HepG2 (cell line): ENCODE measurements at regions of chr3 and their contacts with region 1.

Region 1: DNA sequence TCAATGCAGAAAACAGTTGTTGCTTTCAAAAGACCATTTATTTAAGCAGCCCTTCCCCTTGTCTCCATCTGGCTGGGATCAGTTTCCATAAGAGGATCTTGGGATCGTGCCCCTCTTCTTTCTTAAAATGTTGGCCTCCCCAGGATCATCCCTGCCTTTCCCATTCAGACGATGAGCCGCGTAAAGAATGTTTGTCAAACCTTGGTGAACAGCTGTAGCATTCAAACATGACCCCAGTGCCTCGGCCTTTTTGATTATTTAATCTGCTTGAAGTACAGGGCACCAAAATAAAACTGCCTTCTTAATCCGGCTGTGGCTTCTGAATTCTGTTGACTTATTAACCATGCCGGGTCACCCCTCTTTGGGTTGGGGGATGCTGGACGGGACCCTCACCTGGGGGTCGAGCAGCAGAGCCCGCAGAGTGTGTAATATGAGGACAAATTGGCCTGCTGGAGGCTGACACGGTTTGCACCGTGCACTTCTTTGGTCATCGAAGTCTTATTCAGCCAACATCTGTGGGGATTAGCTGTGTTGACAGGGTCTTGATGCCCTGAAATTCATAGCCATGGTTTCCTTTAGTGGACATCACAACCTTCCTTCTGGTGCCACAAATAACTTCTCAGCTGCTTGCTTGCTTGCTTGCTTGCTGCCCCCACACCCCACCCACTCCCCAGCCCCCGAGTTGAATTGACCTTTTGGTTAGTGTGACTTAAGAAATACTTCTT is at the start of gene LRTM1:
- DNase-seq: no peak
- ATAC-seq: no peak
- H3K4me3 ChIP-seq: no peak within 1 kb of the TSS
- H3K27ac ChIP-seq: no peak within 1 kb of the TSS
- H3K4me1 ChIP-seq: no peaks in the 10 kb centered on the region
- H3K27me3 ChIP-seq: no peaks in the 10 kb centered on the region; a peak in 2 of 5 replicates
- CTCF ChIP-seq: no peak
- EP300 ChIP-seq: no peak
- POLR2A ChIP-seq: no peak
- RAD21 ChIP-seq: no peak
- total RNA-seq, gene LRTM1: not detected in 2 replicates

Region 2: GRCh38 chr3:54691289-54691771 is 236.9 kb before region 1 on chr3:
- CTCF ChIA-PET with region 1: no interaction called
- POLR2A ChIA-PET with region 1: no interaction called
- in situ Hi-C with region 1: no loop called
- intact Hi-C with region 1: no loop called
- DNase-seq: no peak
- ATAC-seq: no peak
- H3K4me3 ChIP-seq: no peak overlapping the region
- H3K27ac ChIP-seq: no peak overlapping the region
- H3K4me1 ChIP-seq: peaks cover under 1% of the 10 kb centered on the region; the same call in 1 of the 2 replicates
- H3K27me3 ChIP-seq: no peaks in the 10 kb centered on the region
- CTCF ChIP-seq: no peak
- EP300 ChIP-seq: no peak
- POLR2A ChIP-seq: no peak
- RAD21 ChIP-seq: no peak

Region 3: GRCh38 chr3:54756330-54756731 is 171.9 kb before region 1 on chr3:
- CTCF ChIA-PET with region 1: no interaction called
- POLR2A ChIA-PET with region 1: no interaction called
- in situ Hi-C with region 1: no loop called
- intact Hi-C with region 1: no loop called
- DNase-seq: no peak
- ATAC-seq: no peak
- H3K4me3 ChIP-seq: no peak overlapping the region
- H3K27ac ChIP-seq: no peak overlapping the region
- H3K4me1 ChIP-seq: no peaks in the 10 kb centered on the region
- H3K27me3 ChIP-seq: no peaks in the 10 kb centered on the region; a peak in 1 of 5 replicates
- CTCF ChIP-seq: no peak
- EP300 ChIP-seq: no peak
- POLR2A ChIP-seq: no peak
- RAD21 ChIP-seq: no peak

Region 4: GRCh38 chr3:54900838-54901591 is 27.2 kb before region 1 on chr3:
- CTCF ChIA-PET with region 1: no interaction called
- POLR2A ChIA-PET with region 1: no interaction called
- in situ Hi-C with region 1: no loop called
- intact Hi-C with region 1: loop called (anchors 1 kb)
- DNase-seq: no peak
- ATAC-seq: no peak
- H3K4me3 ChIP-seq: no peak overlapping the region
- H3K27ac ChIP-seq: no peak overlapping the region
- H3K4me1 ChIP-seq: no peaks in the 10 kb centered on the region
- H3K27me3 ChIP-seq: peaks cover 0 to 5% of the 10 kb centered on the region in 2 experiments; a peak in 2 of 5 replicates
- CTCF ChIP-seq: no peak
- EP300 ChIP-seq: no peak
- POLR2A ChIP-seq: no peak
- RAD21 ChIP-seq: no peak